Endothelial cell of umbilical vein (primary cell): ENCODE measurements at regions of chr1 and their contacts with region 1.

Region 1: GRCh38 chr1:167270349-167271092 is 49.8 kb downstream of the POU2F1 start:
- DNase-seq: peak; percentile 47
- H3K4me3 ChIP-seq: no peak overlapping the region
- H3K27ac ChIP-seq: no peak overlapping the region
- H3K4me1 ChIP-seq: peaks cover 3% of the 10 kb centered on the region
- H3K27me3 ChIP-seq: no peaks in the 10 kb centered on the region
- CTCF ChIP-seq: no peak
- POLR2A ChIP-seq: no peak

Region 2: DNA sequence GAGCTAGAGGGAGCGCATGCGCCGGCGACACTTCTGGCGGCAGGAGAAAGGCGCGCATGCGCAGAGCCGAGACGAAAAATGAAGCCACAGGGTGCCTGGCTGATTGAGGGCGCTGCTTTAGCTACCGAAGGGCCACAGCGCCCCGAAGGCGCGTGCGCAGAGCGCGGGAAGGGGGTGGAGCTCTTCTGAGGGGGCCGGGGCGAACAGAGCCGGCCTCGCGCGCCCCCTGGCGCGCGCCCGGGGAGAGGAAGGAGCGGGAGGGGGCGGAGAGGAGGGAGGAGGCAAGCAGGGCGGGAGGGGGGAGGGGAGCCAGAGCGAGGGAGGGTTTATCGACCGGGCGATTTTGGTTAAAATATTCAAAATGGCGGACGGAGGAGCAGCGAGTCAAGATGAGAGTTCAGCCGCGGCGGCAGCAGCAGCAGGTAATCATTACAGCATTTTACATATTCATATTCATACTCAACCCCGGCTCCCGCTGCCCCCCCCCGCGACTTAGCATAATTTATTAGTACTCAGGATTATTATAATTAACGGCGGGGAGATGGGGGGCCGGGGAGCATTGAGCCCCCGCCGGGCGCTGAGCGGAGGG is 49.9 kb before region 1 on chr1 and contains the start of gene POU2F1:
- CTCF ChIA-PET with region 1: interaction called, 15 read pairs
- POLR2A ChIA-PET with region 1: interaction called, 9 read pairs
- dilution Hi-C with region 1: no loop called
- intact Hi-C with region 1: no loop called
- DNase-seq: peak; percentile 99
- H3K4me3 ChIP-seq: peak within 1 kb of the TSS; percentile 86 to 95 (median 88)
- H3K27ac ChIP-seq: peak within 1 kb of the TSS; percentile 62
- H3K4me1 ChIP-seq: peaks cover 8% of the 10 kb centered on the region
- H3K27me3 ChIP-seq: no peaks in the 10 kb centered on the region
- CTCF ChIP-seq: peak; percentile 59 to 88
- POLR2A ChIP-seq: peak; percentile 83
- total RNA-seq, gene POU2F1: 12.9 and 15.0 TPM in 2 replicates

Region 3: DNA sequence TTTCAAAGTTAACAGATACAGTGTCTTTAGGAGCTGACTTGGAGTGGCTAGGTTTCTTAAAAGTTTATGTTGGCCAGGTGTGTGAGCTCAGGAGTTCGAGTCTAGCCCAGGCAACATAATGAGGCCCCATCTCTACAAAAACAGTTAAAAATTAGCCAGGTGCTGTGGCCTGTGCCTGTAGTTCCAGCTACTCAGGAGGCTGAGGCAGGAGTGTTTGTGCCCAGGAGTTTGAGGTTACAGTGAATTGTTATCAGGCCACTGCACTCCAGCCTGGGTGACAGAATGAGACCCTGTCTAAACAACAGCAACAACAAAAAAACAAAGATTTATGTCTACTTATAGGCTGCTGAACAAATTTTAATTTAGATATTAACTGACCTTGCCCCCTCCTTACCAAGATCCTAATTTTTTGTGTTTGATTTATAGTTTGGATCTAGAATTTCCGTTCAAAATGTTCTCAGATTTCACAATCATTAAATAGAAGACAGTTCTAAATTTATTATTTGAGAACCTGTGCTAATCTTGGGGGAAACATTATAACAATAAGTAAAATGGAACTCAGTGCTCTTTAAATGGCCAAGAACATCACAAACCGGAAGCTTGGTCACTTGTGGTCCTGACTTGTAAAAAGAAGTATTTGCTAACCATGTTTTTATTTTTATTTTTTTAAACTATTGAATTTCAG is 18.0 kb after region 1 on chr1:
- CTCF ChIA-PET with region 1: interaction called, 22 read pairs
- POLR2A ChIA-PET with region 1: no interaction called
- dilution Hi-C with region 1: no loop called
- intact Hi-C with region 1: no loop called
- DNase-seq: no peak
- H3K4me3 ChIP-seq: no peak overlapping the region
- H3K27ac ChIP-seq: no peak overlapping the region
- H3K4me1 ChIP-seq: peaks cover 10% of the 10 kb centered on the region
- H3K27me3 ChIP-seq: no peaks in the 10 kb centered on the region
- CTCF ChIP-seq: no peak
- POLR2A ChIP-seq: no peak

Region 4: DNA sequence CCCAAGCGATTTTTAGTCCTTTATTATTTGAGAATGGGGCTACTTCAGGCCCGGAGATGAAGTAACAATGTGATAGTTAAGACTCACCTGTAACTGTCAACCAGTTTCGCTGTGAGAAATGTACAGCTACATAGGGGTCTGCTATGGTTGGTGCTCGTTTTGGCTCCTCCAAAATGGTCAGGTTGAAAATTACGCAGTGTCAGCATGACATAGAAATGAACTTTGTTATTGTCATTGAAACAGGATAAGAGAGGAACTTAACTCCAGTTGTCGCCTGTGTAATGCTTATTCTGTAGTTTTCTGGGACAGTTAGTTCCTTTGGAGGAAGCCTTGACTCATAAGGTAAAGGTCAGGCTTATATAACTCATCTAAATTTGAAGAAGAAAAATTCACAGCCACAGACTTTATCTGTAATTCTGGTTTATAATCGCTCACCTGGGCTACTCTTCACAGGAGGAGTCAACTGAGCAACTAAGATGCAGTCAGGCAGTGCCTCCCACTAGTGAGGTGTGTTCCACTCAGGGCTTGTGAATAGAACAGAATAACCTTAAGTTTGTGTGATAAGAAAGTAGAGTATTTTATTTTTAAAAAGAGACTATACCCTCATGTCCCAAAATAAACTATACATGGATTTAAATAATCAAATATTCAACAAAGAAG is 116.9 kb after region 1 on chr1:
- CTCF ChIA-PET with region 1: interaction called, 11 read pairs
- POLR2A ChIA-PET with region 1: no interaction called
- dilution Hi-C with region 1: no loop called
- intact Hi-C with region 1: no loop called
- DNase-seq: no peak
- H3K4me3 ChIP-seq: no peak overlapping the region
- H3K27ac ChIP-seq: no peak overlapping the region
- H3K4me1 ChIP-seq: no peaks in the 10 kb centered on the region
- H3K27me3 ChIP-seq: no peaks in the 10 kb centered on the region
- CTCF ChIP-seq: no peak
- POLR2A ChIP-seq: no peak

Region 5: GRCh38 chr1:167431261-167431908 is 160.9 kb after region 1 on chr1:
- CTCF ChIA-PET with region 1: interaction called, 12 read pairs
- POLR2A ChIA-PET with region 1: no interaction called
- dilution Hi-C with region 1: no loop called
- intact Hi-C with region 1: no loop called
- DNase-seq: no peak
- H3K4me3 ChIP-seq: no peak overlapping the region
- H3K27ac ChIP-seq: no peak overlapping the region
- H3K4me1 ChIP-seq: no peaks in the 10 kb centered on the region
- H3K27me3 ChIP-seq: no peaks in the 10 kb centered on the region
- CTCF ChIP-seq: no peak
- POLR2A ChIP-seq: no peak

Region 6: GRCh38 chr1:167474191-167474716 is 203.7 kb after region 1 on chr1:
- CTCF ChIA-PET with region 1: no interaction called
- POLR2A ChIA-PET with region 1: no interaction called
- dilution Hi-C with region 1: no loop called
- intact Hi-C with region 1: no loop called
- DNase-seq: no peak
- H3K4me3 ChIP-seq: no peak overlapping the region
- H3K27ac ChIP-seq: no peak overlapping the region
- H3K4me1 ChIP-seq: no peaks in the 10 kb centered on the region
- H3K27me3 ChIP-seq: peaks cover 0 to 1% of the 10 kb centered on the region in 2 experiments
- CTCF ChIP-seq: no peak
- POLR2A ChIP-seq: no peak

Region 7: GRCh38 chr1:167542109-167543032 is 271.9 kb after region 1 on chr1:
- CTCF ChIA-PET with region 1: interaction called, 25 read pairs
- POLR2A ChIA-PET with region 1: no interaction called
- dilution Hi-C with region 1: no loop called
- intact Hi-C with region 1: no loop called
- DNase-seq: no peak
- H3K4me3 ChIP-seq: no peak overlapping the region
- H3K27ac ChIP-seq: no peak overlapping the region
- H3K4me1 ChIP-seq: no peaks in the 10 kb centered on the region
- H3K27me3 ChIP-seq: no peaks in the 10 kb centered on the region
- CTCF ChIP-seq: no peak
- POLR2A ChIP-seq: no peak